ENCODE measurements at regions of chr17 and their contacts with region 1.

Region 1: DNA sequence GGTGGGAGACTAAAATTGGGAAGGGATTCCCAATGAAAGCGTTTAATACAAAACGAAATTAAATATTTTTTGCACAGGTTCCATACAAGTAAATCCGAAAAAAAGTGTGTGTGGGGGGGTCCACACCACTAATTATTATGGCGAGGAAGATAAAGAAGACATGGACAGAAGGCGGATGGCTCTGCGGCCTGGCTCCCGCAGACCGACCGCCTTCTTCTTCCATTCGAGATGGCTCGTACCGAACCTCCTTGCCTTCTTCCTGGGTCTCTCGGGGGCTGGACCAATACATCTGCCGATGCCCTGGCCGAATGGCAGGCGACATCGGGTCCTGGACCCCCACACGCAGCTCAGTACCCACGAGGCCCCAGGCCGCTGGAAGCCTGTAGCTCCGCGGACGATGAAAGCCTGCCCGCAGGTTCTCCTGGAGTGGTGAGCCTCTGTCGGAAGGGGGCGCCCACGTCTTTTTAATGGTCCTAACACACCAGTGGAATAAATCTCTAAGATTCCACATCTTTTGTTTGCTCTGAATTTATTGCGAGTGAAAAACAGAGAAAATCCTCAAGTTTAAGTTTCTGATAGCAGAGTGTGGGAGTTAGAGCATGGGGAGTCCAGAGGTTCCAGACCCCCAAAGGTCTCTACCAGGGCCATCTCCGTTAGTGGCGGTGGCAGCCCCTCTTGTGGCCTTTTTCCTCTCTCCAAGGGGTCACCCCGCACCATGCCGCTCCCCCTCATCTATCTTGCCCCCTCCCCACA is 1.4 kb downstream of the PRAC2 start:
- DNase-seq: peak; percentile 55
- H3K4me3 Mint-ChIP-seq: peak overlapping the region; percentile 47
- H3K27ac Mint-ChIP-seq: peak overlapping the region; percentile 75
- H3K4me1 Mint-ChIP-seq: peaks cover 14% of the 10 kb centered on the region
- H3K27me3 Mint-ChIP-seq: peaks cover 92% of the 10 kb centered on the region

Region 2: DNA sequence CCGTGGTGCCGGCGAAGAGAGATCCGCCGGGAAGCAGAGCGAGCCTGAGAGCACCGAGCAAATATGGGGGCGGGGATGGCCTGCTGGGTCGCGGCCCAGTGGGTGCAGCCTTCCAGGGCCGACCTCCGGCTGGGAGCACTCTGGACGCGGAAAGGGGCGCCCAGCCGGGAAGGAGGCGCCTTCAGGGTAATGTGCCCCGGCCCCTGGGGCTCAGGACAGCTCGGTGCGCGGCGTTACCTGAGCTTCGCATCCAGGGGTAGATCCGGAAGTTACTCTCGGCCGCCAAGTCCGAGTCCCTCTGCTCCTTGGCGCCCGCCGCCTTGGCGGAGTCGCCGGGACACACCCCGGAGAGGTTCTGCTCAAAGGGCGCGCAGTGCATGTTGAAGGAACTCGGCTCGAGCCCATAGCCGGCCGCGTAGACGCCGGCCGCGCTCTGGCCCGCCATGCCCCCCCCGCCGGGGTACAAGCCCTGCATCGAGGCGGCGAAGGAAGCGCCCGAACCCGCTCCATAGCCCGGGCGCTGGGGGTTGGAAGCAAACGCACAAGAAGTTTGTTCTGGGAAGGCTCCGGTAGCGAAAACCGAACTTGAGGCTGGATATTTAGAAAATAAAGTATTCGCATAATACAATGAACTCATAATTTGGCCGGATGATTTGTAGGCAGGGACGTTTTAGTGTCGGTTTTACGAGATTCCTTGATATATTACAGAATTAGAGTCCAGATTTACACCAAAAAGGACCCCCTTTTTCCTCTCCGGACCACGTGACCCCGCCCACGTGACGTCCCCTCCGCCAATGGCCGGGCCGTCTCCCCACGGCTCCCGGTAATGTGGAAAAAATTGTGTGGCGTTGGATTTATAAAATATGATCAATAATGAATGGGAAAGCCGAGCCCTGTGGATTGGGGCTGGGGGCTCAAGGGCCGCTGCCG is 113.9 kb before region 1 on chr17 and contains the start of gene HOXB7:
- intact Hi-C with region 1: loop called (anchors 2 kb)
- DNase-seq: peak; percentile 49
- H3K4me3 Mint-ChIP-seq: peak within 1 kb of the TSS; percentile 86
- H3K27ac Mint-ChIP-seq: peak within 1 kb of the TSS; percentile 32
- H3K4me1 Mint-ChIP-seq: peaks cover 34% of the 10 kb centered on the region
- H3K27me3 Mint-ChIP-seq: peaks cover 76% of the 10 kb centered on the region
- total RNA-seq, gene HOXB7: 0.49 and 0.51 TPM in 2 replicates

Region 3: GRCh38 chr17:48671697-48672171 is 52.7 kb before region 1 on chr17:
- intact Hi-C with region 1: loop called (anchors 5 kb)
- DNase-seq: peak; percentile 46
- H3K4me3 Mint-ChIP-seq: peak overlapping the region; percentile 20
- H3K27ac Mint-ChIP-seq: no peak overlapping the region
- H3K4me1 Mint-ChIP-seq: peaks cover 6% of the 10 kb centered on the region
- H3K27me3 Mint-ChIP-seq: peaks cover 39% of the 10 kb centered on the region

Region 4: DNA sequence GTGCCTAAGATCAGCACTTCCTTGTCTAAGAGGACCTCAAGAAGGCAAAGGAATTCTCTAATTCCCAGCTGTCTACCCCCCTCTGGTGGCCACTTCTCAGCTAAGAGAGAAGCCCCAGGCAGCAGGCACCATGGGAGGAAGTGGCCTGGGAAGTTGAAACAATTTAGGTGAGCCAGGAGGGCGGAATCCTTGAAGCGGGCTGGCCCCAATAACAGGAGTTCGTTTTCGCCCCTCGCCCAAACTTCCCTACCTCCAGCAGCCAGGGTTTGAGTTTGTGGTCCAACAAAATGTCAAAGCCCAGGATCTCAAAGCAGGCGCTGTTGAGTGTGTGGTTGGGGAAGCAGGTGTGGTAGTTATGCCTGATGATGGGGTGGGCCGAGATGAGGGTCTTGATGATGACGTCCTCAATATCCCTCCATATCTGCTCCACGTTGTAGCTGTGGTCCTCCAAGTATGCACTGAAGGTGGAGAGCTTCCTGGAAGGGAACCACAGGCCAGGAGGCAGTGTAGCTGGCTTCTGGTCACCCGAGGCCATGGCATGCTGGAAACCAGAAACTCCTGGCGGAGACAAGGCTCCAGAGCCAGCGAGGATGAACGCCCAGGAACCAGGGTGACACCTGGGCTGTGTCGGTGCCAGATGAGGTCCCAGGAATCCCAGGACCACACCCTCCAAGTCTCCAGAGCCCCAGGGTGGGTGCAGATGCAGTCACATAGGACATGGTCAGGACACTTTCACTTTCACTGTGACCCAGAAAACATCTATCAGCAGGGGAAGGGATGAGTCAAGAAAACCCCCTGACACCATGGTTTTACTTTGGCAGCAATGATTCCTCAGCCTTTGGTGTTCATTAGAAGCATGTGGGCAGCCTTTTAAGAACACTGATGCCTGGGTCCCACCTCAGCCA is 67.0 kb after region 1 on chr17:
- intact Hi-C with region 1: loop called (anchors 10 kb)
- DNase-seq: no peak
- H3K4me3 Mint-ChIP-seq: no peak overlapping the region
- H3K27ac Mint-ChIP-seq: no peak overlapping the region
- H3K4me1 Mint-ChIP-seq: peaks cover 14% of the 10 kb centered on the region
- H3K27me3 Mint-ChIP-seq: peaks cover 42% of the 10 kb centered on the region

Region 5: DNA sequence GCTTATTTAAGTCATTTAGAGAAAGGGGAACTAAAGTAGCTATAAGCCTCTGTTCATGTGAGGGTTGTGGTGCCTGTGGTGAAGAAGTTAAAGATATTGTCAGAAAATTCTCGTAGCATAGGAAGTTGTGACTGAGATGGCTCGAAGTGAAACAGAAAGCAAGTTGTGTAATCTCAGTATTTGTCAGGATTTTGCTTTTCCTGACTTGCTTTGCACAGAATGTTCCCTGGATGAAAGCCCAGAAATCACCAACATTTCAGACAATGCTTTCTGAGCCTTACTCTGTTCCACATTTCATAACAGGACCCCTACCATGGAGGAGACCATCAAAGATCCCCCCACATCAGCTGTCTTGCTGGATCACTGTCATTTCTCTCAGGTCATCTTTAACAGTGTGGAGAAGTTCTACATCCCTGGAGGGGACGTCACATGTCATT is 117.0 kb after region 1 on chr17:
- intact Hi-C with region 1: no loop called
- DNase-seq: peak; percentile 54
- H3K4me3 Mint-ChIP-seq: peak overlapping the region; percentile 66
- H3K27ac Mint-ChIP-seq: peak overlapping the region; percentile 9
- H3K4me1 Mint-ChIP-seq: peaks cover 54% of the 10 kb centered on the region
- H3K27me3 Mint-ChIP-seq: peaks cover 2% of the 10 kb centered on the region

Region 6: DNA sequence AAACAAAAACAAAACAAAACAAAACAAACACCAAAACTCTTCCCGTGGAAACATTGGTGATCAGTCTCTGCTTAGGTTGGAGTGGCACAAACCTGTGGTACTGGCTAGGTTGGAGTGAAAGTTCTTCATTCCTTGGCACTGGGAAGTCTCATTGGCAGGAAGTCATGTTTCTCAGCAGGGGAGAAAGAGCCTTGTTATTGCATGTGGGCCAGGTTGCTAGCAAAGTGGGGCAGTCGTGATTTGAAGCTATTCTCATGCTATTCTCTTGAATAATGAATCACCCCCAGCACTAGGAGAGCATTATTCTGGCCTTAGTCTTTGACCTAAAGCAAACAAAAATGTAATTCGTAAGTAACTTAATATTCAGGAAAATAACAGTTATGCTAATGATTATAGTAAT is 383.9 kb after region 1 on chr17:
- intact Hi-C with region 1: no loop called
- DNase-seq: no peak
- H3K4me3 Mint-ChIP-seq: no peak overlapping the region
- H3K27ac Mint-ChIP-seq: no peak overlapping the region
- H3K4me1 Mint-ChIP-seq: no peaks in the 10 kb centered on the region
- H3K27me3 Mint-ChIP-seq: peaks cover 13% of the 10 kb centered on the region

Measured in activated T-helper 1 cell treated with anti-CD3 and anti-CD28 coated beads, Interleukin-12 subunit alpha, Interleukin-12 subunit beta, Interleukin-2, Interleukin-4 antibody, amounts not matched to agents 30 ng/mL and 10 ng/mL and 1 ng/mL, durations not matched to agents 14 hours and 24 hours and 36 hours (primary cell).